AG04449 (cell line): ENCODE measurements at regions of chr1 and their contacts with region 1.

Region 1: GRCh38 chr1:32702599-32703478 is at the start of gene SYNC:
- DNase-seq: peak; percentile 71
- H3K4me3 ChIP-seq: peak within 1 kb of the TSS; percentile 89
- CTCF ChIP-seq: no peak

Region 2: DNA sequence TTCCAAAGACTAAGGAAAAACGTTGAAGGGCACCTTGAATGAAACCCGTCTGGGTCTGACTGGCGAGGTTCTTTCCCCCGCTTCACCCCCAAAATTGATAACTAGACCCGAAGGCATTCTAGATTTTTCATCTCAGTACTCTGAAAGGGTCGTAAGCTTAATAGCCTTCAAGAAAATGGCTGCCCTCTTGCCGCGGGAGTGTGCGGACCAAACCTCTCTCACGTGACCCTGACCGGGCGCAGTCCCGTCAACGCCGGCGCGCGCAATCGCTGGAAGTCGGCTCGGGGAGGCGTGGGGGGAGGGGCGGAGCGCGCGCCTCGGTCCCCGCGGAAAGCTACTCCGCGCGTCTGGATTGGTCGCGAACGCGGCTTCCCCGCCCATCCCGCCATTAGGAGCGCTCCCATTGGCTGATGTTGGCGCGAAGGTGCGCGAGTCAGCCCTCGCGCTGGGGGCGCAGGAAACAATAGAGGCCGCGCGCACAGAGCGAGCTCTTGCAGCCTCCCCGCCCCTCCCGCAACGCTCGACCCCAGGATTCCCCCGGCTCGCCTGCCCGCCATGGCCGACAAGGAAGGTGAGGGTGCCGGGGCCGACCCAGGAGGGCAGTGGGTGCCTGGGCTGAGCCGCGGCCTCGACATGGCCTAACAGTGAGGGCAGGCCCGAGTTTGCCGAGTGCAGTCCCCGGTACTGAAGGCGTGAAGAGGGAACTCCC is 51.9 kb before region 1 on chr1 and contains the start of gene RBBP4:
- CTCF ChIA-PET with region 1: no interaction called
- POLR2A ChIA-PET with region 1: interaction called, 10 read pairs
- DNase-seq: peak; percentile 73
- H3K4me3 ChIP-seq: peak within 1 kb of the TSS; percentile 76
- CTCF ChIP-seq: no peak

Region 3: DNA sequence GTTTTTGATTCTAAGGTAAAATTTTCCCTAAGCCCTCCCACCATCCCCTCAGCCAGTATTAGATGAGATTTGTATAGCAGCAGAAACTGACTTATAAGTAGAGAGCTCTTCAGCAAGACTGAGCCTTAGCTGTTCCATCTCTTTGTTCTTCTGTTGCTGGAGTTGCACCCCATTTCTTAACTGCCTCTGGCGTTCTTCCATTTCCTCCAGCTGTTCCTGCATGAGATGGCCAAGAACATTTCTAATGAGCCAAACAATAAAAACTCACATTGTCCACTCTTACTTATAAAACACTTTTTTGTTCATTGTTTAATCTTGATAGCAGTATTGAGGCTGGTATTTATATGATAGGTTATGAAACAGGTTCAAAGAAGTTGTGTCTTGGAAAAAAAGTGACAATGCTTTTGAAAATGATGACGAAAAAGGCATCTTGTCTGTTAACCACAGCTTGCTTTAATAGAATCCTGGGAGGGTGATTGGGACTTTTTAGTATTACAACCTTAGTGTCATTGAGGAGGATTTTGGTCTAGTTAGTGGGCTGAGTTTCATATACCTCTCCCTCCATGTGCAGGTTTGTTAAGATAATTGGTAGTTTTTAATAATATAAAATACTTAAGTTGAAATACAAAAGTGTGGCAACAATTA is 18.6 kb before region 1 on chr1:
- CTCF ChIA-PET with region 1: no interaction called
- POLR2A ChIA-PET with region 1: interaction called, 11 read pairs
- DNase-seq: no peak
- H3K4me3 ChIP-seq: no peak overlapping the region
- CTCF ChIP-seq: no peak

Region 4: GRCh38 chr1:32724678-32725614 is 22.1 kb after region 1 on chr1:
- CTCF ChIA-PET with region 1: interaction called, 4 read pairs
- POLR2A ChIA-PET with region 1: interaction called, 20 read pairs
- DNase-seq: peak; percentile 58
- H3K4me3 ChIP-seq: peak overlapping the region; percentile 29
- CTCF ChIP-seq: no peak

Region 5: GRCh38 chr1:32733582-32734321 is 30.9 kb after region 1 on chr1:
- CTCF ChIA-PET with region 1: interaction called, 4 read pairs
- POLR2A ChIA-PET with region 1: interaction called, 20 read pairs
- DNase-seq: no peak
- H3K4me3 ChIP-seq: no peak overlapping the region
- CTCF ChIP-seq: no peak

Region 6: DNA sequence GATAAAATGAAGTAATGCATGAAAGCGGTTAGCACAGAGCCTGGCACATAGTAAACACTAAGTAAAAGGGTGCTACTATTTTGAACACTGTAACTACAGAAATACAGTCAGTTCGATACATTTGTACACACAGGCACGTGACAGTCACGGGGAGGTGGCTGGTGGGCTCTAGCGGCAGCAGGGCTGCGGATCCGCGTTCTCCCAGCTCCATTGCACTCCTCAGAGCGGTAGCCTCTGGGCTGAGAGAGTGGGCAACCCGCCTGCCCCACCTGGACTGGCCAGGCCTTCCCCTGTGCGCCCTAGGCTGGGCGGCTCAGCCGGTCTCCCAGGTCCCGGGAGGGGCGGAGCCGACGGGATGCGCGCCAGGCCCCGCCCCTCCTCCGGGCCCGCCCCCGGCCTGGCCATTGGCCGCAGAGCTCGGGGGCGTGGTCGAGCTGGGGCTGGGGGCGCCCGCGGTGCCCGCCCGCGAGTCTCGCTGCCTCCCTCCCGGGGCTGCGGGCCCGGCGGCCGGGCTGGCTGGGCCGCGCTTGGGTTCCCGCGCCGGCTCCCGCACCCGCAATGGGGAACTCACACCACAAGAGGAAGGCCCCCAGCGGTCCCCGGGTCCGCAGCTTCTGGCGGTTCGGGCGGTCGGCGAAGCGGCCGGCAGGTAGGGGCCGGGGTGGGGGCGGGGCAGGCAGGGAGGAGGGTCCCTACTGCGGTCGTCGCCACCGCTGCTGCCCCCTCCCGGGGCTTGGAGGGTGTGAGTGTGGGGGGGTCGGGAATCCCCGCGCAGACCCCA is 50.9 kb after region 1 on chr1:
- CTCF ChIA-PET with region 1: no interaction called
- POLR2A ChIA-PET with region 1: interaction called, 12 read pairs
- DNase-seq: no peak
- H3K4me3 ChIP-seq: peak overlapping the region; percentile 68
- CTCF ChIP-seq: no peak